Right ventricle myocardium inferior (tissue), 1 donor: ENCODE measurements at regions of chr1 and their contacts with region 1.

Region 1: DNA sequence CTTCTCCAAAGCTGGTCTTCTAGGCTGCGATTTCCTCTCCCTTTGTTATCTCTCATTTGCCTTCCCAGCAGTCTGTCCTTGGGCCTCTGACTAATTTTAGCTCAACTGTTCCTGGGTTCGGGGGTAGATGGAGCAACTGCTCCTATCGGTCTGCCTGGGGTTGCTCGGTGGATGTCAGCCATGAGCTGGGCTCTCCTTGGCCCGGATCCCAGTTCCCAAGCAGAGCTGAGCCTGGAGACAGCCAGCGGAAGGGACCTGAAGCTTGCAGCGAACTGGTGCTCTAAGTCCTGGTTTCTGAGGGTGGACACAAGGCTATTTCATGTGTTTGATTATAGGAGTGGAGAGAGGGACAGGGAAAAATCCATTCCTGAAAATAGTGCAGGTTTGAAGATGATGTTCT is 423.0 kb downstream of the RPS6KC1 start:
- DNase-seq: peak; percentile 68
- ATAC-seq: peak; percentile 93

Region 2: DNA sequence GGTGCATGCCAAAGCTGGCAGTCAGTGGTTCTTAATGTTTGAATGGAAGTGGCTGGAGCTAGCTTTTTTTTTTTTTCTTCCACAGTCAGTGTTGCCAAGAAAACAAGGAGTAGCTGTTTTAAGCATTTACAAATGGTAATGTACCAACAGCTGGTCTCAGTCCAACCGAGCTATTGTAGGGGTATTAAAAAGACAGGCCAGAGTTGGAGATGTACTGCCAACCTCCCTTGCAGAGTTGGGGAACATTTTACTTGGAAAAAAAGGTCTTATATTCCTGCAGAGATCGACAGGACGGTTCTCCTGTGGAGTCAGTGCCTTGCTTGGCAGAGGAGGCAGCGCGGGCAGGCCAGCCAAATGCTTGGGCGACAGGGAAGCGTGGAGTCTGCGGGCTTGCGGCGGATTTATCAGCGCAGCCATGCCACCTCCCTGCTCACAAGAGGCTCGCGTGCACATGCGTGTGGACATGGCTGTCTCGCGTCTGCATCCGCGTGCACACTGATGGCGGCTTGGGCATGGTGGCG is 84.9 kb before region 1 on chr1:
- intact Hi-C with region 1: loop called (anchors 5 kb)
- DNase-seq: no peak
- ATAC-seq: peak; percentile 55

Region 3: GRCh38 chr1:213419369-213420030 is 54.6 kb before region 1 on chr1:
- intact Hi-C with region 1: no loop called
- DNase-seq: no peak
- ATAC-seq: no peak

Region 4: DNA sequence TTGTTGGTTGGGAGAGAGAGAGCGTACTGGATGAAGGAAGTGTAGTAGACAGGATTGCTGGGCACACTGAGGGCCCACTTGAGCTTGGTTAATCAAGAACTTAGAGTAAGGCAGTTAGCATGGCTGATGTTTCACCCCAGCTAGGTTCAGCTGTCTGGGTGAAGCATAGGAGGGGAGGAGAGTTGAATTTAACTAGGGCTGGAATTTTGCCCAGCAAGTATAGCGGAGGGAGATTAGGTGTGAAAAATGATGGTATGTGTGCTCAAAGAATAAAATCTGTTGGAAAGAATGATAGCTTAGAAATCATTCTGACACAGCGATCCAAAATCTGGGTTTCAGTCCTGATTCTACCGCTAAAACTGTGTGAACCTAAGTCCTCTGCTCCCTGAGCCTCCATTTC is 52.3 kb after region 1 on chr1:
- intact Hi-C with region 1: loop called (anchors 5 kb)
- DNase-seq: no peak
- ATAC-seq: no peak